Left ventricle myocardium inferior (tissue), 1 donor: ENCODE measurements at regions of chr20 and their contacts with region 1.

Region 1: GRCh38 chr20:3115190-3116107 is 30.9 kb upstream of the AVP start:
- DNase-seq: no peak
- H3K4me3 ChIP-seq: no peak overlapping the region
- H3K27ac ChIP-seq: no peak overlapping the region
- H3K4me1 ChIP-seq: peaks cover 15% of the 10 kb centered on the region
- H3K27me3 ChIP-seq: no peaks in the 10 kb centered on the region
- CTCF ChIP-seq: peak; percentile 87

Region 2: GRCh38 chr20:3040086-3040485 is 75.4 kb before region 1 on chr20:
- intact Hi-C with region 1: no loop called
- DNase-seq: no peak
- H3K4me3 ChIP-seq: no peak overlapping the region
- H3K27ac ChIP-seq: no peak overlapping the region
- H3K4me1 ChIP-seq: peaks cover 23% of the 10 kb centered on the region
- H3K27me3 ChIP-seq: no peaks in the 10 kb centered on the region
- CTCF ChIP-seq: no peak

Region 3: DNA sequence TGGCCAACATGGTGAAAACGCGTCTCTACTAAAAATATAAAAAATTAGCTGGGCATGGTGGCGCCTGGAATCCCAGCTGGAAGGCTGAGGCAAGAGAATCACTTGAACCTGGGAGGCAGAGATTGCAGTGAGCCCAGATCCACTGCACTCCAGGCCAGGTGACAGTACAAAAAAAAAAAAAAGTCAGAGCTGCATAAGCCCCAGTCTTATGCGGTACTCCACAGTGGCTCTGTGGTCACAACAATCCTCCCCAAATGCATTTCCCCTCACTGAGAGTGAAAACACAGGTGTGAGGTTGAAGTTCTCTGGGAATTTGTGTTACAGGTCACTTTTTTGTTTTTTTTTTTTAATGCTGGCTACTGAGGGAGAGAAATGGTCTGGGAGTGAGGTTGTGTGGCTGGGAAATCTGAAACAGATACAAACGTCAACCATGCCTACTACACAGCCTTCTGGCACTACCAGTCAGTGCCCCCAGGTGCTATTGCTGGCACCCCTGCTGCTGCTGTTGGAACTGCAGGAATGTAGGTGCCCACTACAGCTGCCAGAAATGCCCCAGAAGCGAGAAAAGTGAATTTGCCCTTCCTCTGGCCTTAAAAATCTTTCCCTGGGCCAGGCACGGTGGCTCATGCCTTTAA is 63.9 kb before region 1 on chr20:
- intact Hi-C with region 1: loop called (anchors 10 kb)
- DNase-seq: no peak
- H3K4me3 ChIP-seq: no peak overlapping the region
- H3K27ac ChIP-seq: no peak overlapping the region
- H3K4me1 ChIP-seq: peaks cover 14% of the 10 kb centered on the region
- H3K27me3 ChIP-seq: no peaks in the 10 kb centered on the region
- CTCF ChIP-seq: no peak